GM13977 (cell line): ENCODE measurements at regions of chr21 and their contacts with region 1.

Region 1: GRCh38 chr21:25881525-25882376 is 147.0 kb downstream of the GABPA start:
- DNase-seq: peak; percentile 73
- CTCF ChIP-seq: peak; percentile 92

Region 2: DNA sequence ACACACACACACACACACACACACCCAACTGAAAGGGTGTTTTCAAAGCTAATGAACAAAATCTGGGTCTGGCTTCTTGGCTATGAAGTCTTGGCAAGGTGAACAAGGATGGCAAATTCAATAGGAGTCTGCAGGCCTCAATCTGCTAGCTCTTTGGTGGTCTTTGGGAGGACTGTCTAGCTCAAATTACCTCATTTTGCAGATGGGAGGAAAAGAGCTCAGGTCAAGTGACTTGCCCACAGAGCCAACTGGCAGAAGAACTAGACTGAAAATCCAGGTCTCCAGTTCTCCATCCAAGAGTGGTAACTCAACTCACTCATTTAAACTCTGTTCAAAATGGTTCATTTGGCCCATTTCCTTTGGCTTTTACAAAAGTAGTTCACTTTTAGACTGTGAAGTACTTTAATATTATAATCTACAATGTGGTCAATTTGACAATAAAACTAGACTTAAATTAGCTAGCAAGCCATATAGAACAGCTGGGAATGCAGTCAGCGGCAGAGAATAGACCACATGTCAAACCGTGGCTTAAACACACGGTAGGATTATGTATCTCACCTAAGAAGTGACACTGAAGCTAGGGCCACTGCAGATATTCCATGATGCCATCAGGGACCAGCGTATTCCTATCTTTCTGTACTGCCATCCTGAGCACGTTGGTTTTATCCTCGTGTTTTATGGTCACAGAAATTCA is 175.9 kb after region 1 on chr21:
- in situ Hi-C with region 1: no loop called
- DNase-seq: no peak
- CTCF ChIP-seq: no peak

Region 3: GRCh38 chr21:26170471-26171257 is 288.9 kb after region 1 on chr21 and contains the start of gene APP:
- in situ Hi-C with region 1: loop called (anchors 25 kb)
- DNase-seq: peak; percentile 96
- CTCF ChIP-seq: peak; percentile 94

Region 4: DNA sequence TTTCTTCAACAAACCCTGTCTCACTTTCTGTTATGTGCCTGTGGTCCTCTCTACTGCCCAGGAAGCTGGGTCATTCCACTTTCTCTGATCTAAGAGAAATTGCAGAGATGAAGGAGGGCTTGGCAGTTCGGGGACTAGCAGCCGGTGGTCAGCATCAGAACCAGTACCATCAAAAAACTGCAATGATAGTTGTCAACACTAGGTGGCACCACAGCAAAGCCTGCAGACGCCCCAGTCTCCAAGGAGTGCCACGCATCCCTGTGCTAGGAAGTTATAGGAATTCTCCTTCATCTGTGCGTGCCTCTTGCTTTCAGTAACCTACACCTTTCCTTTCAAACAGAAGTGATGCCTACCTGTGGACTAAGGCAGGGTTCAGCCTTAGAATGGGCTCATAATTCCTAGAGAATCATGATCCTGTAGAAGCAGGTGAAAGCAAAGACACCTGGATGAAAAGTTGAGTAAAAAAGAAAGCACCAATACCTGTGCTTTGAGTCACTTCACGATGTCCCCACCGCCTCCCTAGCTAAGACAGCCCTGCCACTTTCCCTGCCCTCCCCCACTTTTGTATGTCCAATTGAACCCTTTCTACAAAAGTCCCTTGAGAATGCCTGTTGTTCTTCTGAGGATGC is 834.2 kb after region 1 on chr21:
- in situ Hi-C with region 1: loop called (anchors 25 kb)
- DNase-seq: peak; percentile 25
- CTCF ChIP-seq: peak; percentile 63